Calu3 (cell line): ENCODE measurements at regions of chr11 and their contacts with region 1.

Region 1: GRCh38 chr11:1050581-1051355 is 14.2 kb upstream of the MUC6 start:
- DNase-seq: peak; percentile 89
- H3K4me3 Mint-ChIP-seq: no peak overlapping the region
- H3K27ac Mint-ChIP-seq: no peak overlapping the region
- H3K4me1 Mint-ChIP-seq: peaks cover 18% of the 10 kb centered on the region
- H3K27me3 Mint-ChIP-seq: peaks cover 29% of the 10 kb centered on the region
- CTCF ChIP-seq: peak; percentile 92

Region 2: GRCh38 chr11:925496-926321 is 125.1 kb before region 1 on chr11 and contains the start of gene AP2A2:
- CTCF ChIA-PET with region 1: no interaction called
- intact Hi-C with region 1: loop called (anchors 10 kb)
- DNase-seq: peak; percentile 95
- H3K4me3 Mint-ChIP-seq: peak within 1 kb of the TSS; percentile 82
- H3K27ac Mint-ChIP-seq: peak within 1 kb of the TSS; percentile 56
- H3K4me1 Mint-ChIP-seq: peaks cover 10% of the 10 kb centered on the region
- H3K27me3 Mint-ChIP-seq: no peaks in the 10 kb centered on the region
- CTCF ChIP-seq: peak; percentile 88
- total RNA-seq, gene AP2A2: 82.9 and 92.9 TPM in 2 replicates